ENCODE measurements at regions of chr3 and their contacts with region 1.

Region 1: DNA sequence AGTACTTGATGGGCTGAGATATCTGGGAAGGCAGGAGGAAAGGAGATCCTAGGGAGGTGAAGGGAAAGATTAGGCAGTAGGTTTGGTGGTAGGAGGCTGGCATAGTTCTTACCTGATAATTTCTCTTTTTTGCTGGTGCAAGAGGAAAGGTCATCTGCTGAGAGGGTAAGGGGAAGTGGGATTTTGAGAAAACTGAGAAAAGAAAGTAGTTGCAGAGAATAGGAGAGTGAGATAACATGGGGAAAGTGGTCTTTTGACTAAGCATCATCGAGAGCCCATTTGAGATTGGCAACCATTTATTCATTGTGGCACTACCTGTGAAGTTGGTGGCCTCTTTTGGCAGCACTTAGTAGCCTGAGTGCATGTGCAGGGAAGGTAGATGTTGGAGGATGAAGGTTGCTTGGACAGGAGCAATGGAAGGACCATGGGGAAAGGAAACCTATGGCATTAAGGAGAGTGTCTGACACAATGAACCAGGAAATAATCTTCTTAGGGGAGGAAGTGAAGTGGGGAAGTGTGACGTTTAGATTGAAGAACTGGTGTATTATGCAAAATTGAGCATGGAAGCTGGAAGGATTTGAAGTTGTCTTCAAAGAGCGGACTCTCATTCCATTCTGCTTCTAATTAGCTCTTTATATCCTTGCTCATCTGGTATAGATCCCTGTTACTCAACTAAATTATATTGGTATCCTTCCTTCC is 21.9 kb upstream of the USP13 start:
- DNase-seq: no peak
- H3K4me3 ChIP-seq: no peak overlapping the region
- CTCF ChIP-seq: no peak

Region 2: GRCh38 chr3:179653096-179653797 is 22.3 kb after region 1 on chr3:
- CTCF ChIA-PET with region 1: interaction called, 11 read pairs
- POLR2A ChIA-PET with region 1: no interaction called
- DNase-seq: no peak
- H3K4me3 ChIP-seq: peak overlapping the region; percentile 86
- CTCF ChIP-seq: no peak

Region 3: DNA sequence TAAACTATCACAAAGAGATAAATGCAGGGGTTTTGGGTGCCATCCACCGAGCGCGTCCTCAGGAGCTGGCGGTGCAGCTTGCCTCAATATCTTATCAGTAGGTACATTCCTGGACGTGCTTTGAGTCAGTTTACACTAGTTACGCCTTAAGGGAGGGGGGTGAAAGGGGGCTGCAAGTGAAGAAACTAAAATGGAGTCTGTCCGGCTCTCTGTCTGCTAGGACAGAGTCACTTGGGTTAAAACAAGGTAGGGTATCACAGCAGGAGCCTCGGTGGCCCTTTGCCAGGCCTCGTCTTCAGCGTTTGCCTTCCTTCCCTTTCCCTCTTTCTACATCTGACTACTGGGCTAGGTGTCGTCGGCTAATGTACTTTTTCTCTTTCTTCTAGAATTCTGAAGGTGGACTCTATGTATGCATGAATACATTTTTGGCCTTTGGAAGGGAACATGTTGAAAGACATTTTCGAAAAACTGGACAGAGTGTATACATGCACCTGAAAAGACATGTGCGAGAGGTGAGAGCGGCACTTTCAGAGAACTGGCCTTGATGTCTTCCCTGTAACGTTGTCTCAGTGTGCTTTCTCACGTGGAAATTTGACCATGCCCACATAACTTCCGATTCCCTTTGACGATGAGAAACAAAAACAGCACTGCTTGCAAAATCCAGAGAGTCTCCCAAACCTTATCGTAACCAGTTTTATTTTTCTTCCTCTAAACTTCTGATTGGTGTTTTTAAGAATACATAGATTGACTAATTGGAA is 50.8 kb after region 1 on chr3:
- CTCF ChIA-PET with region 1: no interaction called
- POLR2A ChIA-PET with region 1: no interaction called
- DNase-seq: no peak
- H3K4me3 ChIP-seq: no peak overlapping the region
- CTCF ChIP-seq: no peak

Measured in AG04449 (cell line).